CD8-positive, alpha-beta T cell (primary cell): ENCODE measurements at regions of chr4 and their contacts with region 1.

Region 1: GRCh38 chr4:40212674-40213527 is 16.1 kb downstream of the RHOH start:
- DNase-seq: peak in 1 of 9 experiments; percentile 59
- ATAC-seq: no peak
- H3K4me3 ChIP-seq: peak overlapping the region; percentile 5 to 31
- H3K4me3 Mint-ChIP-seq: peak overlapping the region; percentile 67
- H3K27ac ChIP-seq: peak overlapping the region; percentile 42 to 96
- H3K27ac Mint-ChIP-seq: peak overlapping the region; percentile 95
- H3K4me1 ChIP-seq: peaks cover 89% of the 10 kb centered on the region
- H3K4me1 Mint-ChIP-seq: peaks cover 93% of the 10 kb centered on the region
- H3K27me3 ChIP-seq: no peaks in the 10 kb centered on the region
- H3K27me3 Mint-ChIP-seq: no peaks in the 10 kb centered on the region
- CTCF ChIP-seq: no peak

Region 2: GRCh38 chr4:40199999-40200874 is 12.7 kb before region 1 on chr4:
- CTCF ChIA-PET with region 1: interaction called, 12 read pairs
- POLR2A ChIA-PET with region 1: interaction called, 210 read pairs
- intact Hi-C with region 1: loop called (anchors 1 to 2 kb)
- DNase-seq: peak in 7 of 9 experiments; percentile 41 to 88 (median 67)
- ATAC-seq: peak; percentile 24
- H3K4me3 ChIP-seq: peak overlapping the region; percentile 83 to 87
- H3K4me3 Mint-ChIP-seq: peak overlapping the region; percentile 100
- H3K27ac ChIP-seq: peak overlapping the region; percentile 89 to 96
- H3K27ac Mint-ChIP-seq: peak overlapping the region; percentile 100
- H3K4me1 ChIP-seq: peaks cover 25% of the 10 kb centered on the region
- H3K4me1 Mint-ChIP-seq: peaks cover 41% of the 10 kb centered on the region
- H3K27me3 ChIP-seq: no peaks in the 10 kb centered on the region
- H3K27me3 Mint-ChIP-seq: no peaks in the 10 kb centered on the region
- CTCF ChIP-seq: no peak